ENCODE measurements at regions of chr17 and their contacts with region 1.

Region 1: GRCh38 chr17:39653662-39654331 is 11.4 kb upstream of the TCAP start:
- DNase-seq: peak; percentile 93
- ATAC-seq: peak; percentile 46
- H3K4me3 Mint-ChIP-seq: no peak overlapping the region
- H3K27ac Mint-ChIP-seq: no peak overlapping the region; the same call in 1 of the 2 replicates
- H3K4me1 Mint-ChIP-seq: peaks cover 46% of the 10 kb centered on the region
- H3K27me3 Mint-ChIP-seq: no peaks in the 10 kb centered on the region
- CTCF ChIP-seq: peak; percentile 92

Region 2: GRCh38 chr17:39393736-39394135 is 260.1 kb before region 1 on chr17:
- CTCF ChIA-PET with region 1: no interaction called
- POLR2A ChIA-PET with region 1: no interaction called
- DNase-seq: no peak
- ATAC-seq: no peak
- H3K4me3 Mint-ChIP-seq: no peak overlapping the region
- H3K27ac Mint-ChIP-seq: no peak overlapping the region
- H3K4me1 Mint-ChIP-seq: no peaks in the 10 kb centered on the region
- H3K27me3 Mint-ChIP-seq: no peaks in the 10 kb centered on the region
- CTCF ChIP-seq: no peak

Region 3: GRCh38 chr17:39450847-39451581 is 202.8 kb before region 1 on chr17 and contains the start of gene MED1:
- CTCF ChIA-PET with region 1: no interaction called
- POLR2A ChIA-PET with region 1: no interaction called
- DNase-seq: peak; percentile 94
- ATAC-seq: peak; percentile 98
- H3K4me3 Mint-ChIP-seq: peak within 1 kb of the TSS; percentile 99
- H3K27ac Mint-ChIP-seq: peak within 1 kb of the TSS; percentile 98
- H3K4me1 Mint-ChIP-seq: peaks cover 7% of the 10 kb centered on the region
- H3K27me3 Mint-ChIP-seq: no peaks in the 10 kb centered on the region; the same call in 1 of the 2 replicates
- CTCF ChIP-seq: no peak
- total RNA-seq, gene MED1: 47.0 to 50.4 TPM (median 47.9 TPM) in 3 replicates

Region 4: GRCh38 chr17:39517224-39517623 is 136.6 kb before region 1 on chr17:
- CTCF ChIA-PET with region 1: no interaction called
- POLR2A ChIA-PET with region 1: no interaction called
- DNase-seq: no peak
- ATAC-seq: no peak
- H3K4me3 Mint-ChIP-seq: no peak overlapping the region
- H3K27ac Mint-ChIP-seq: no peak overlapping the region
- H3K4me1 Mint-ChIP-seq: no peaks in the 10 kb centered on the region
- H3K27me3 Mint-ChIP-seq: no peaks in the 10 kb centered on the region
- CTCF ChIP-seq: no peak

Region 5: DNA sequence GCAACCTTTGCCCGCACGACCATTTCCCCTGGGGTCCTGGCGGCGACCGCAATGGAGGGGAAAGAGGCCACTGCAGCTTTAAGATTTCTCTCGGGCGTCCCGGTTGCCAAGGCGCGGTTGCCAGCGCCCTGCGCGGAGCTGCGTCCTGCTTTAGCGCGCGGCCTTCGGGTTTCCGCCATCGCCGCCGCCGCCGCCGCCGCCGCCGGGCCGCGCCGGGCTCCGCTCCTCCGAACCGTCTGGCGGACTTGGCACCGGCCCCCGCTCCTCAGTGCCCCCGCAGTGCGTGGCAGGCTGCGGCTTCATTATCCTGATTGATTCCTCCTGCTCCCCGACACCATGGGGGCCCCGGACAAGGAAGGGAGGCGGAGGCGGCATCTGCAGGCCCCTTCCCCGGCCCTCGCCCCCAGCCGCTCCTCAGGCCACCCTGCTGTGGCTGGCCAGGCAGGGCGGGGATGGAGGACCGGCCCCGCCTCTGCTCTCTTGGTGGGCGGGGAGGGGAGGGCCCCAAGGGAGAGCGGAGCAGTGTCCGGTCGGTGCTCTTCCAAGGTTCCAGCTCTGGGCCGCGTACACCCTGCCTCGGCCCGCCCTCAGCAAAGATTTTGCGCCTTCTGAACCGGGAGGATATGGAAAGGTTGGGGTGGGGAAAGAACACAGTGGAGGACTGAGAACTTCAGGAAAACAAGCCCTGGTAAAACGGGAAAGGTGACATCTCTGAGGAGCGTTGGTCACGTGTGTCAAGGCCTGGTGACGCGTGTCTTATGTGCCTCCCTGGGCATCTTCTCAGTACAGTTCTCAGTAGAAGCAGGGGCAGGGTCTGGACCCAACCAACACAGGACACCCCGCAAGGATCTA is 80.1 kb before region 1 on chr17:
- CTCF ChIA-PET with region 1: interaction called, 10 read pairs
- POLR2A ChIA-PET with region 1: no interaction called
- DNase-seq: peak; percentile 70
- ATAC-seq: peak; percentile 82
- H3K4me3 Mint-ChIP-seq: peak overlapping the region; percentile 79
- H3K27ac Mint-ChIP-seq: peak overlapping the region; percentile 73
- H3K4me1 Mint-ChIP-seq: peaks cover 12% of the 10 kb centered on the region
- H3K27me3 Mint-ChIP-seq: peaks cover 30% of the 10 kb centered on the region
- CTCF ChIP-seq: no peak

Region 6: GRCh38 chr17:39636927-39637736 is 16.7 kb before region 1 on chr17 and contains the start of gene STARD3:
- CTCF ChIA-PET with region 1: interaction called, 851 read pairs
- POLR2A ChIA-PET with region 1: interaction called, 3 read pairs
- DNase-seq: peak; percentile 94
- ATAC-seq: peak; percentile 72
- H3K4me3 Mint-ChIP-seq: peak within 1 kb of the TSS; percentile 76
- H3K27ac Mint-ChIP-seq: peak within 1 kb of the TSS; percentile 64
- H3K4me1 Mint-ChIP-seq: peaks cover 70% of the 10 kb centered on the region
- H3K27me3 Mint-ChIP-seq: no peaks in the 10 kb centered on the region
- CTCF ChIP-seq: no peak
- total RNA-seq, gene STARD3: 64.9 to 75.3 TPM (median 65.4 TPM) in 3 replicates

Region 7: GRCh38 chr17:39677542-39678339 is 23.9 kb after region 1 on chr17:
- CTCF ChIA-PET with region 1: interaction called, 272 read pairs
- POLR2A ChIA-PET with region 1: no interaction called
- DNase-seq: no peak
- ATAC-seq: no peak
- H3K4me3 Mint-ChIP-seq: no peak overlapping the region
- H3K27ac Mint-ChIP-seq: no peak overlapping the region
- H3K4me1 Mint-ChIP-seq: peaks cover 22% of the 10 kb centered on the region
- H3K27me3 Mint-ChIP-seq: no peaks in the 10 kb centered on the region
- CTCF ChIP-seq: no peak

Region 8: GRCh38 chr17:39704821-39705551 is 51.2 kb after region 1 on chr17:
- CTCF ChIA-PET with region 1: interaction called, 17 read pairs
- POLR2A ChIA-PET with region 1: interaction called, 5 read pairs
- DNase-seq: peak; percentile 38
- ATAC-seq: peak; percentile 62
- H3K4me3 Mint-ChIP-seq: no peak overlapping the region; the same call in 1 of the 2 replicates
- H3K27ac Mint-ChIP-seq: peak overlapping the region; percentile 92
- H3K4me1 Mint-ChIP-seq: peaks cover 51% of the 10 kb centered on the region
- H3K27me3 Mint-ChIP-seq: no peaks in the 10 kb centered on the region
- CTCF ChIP-seq: no peak

Region 9: DNA sequence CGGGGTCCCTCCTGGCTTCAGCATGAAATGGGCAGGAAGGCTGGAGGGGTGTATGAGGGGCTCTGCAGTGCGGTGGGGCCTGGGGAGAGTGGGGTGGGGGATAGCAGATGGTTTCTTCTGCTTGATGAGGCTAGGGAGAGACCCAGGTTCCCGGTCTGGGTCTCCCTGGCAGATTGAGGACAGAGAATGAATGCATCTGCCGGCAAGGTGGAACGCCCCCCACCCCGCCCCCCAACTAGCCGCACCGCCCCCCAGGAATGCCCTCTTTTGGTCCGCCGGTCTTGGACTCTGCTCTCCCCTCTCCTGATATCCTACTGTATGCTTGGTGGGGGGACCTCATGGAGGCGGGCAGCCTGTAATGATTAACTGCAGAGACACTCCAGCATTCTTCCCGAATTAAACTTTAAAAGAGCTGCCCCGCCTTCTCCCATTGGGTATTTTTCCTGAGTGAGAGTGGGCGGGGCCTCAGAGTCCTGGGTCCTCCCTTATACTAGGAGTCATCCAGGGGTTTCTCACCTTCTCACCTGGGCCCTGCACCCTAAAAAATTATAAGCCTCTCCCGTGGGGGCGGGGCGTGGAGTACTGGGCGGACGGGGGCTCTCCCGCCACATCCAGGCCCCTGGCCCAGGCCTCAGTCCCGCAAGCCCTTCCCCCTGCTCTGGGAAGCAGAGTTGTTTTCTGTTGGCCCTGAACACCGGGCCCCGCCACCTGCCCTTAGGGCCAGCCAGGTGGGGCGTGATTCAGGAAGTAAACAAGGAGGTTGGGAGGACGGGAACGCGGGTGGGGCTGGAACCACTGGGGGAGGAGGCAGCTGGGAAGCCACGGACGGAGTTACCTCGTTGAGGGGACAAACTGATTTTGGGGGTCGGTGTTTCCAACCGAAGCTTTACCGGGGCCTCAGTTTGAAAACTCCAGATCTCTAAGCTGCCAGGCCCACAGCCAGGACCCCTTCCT is 85.4 kb after region 1 on chr17:
- CTCF ChIA-PET with region 1: no interaction called
- POLR2A ChIA-PET with region 1: no interaction called
- DNase-seq: peak; percentile 71
- ATAC-seq: peak; percentile 12
- H3K4me3 Mint-ChIP-seq: peak overlapping the region; percentile 91
- H3K27ac Mint-ChIP-seq: peak overlapping the region; percentile 98
- H3K4me1 Mint-ChIP-seq: peaks cover 38% of the 10 kb centered on the region
- H3K27me3 Mint-ChIP-seq: no peaks in the 10 kb centered on the region; the same call in 1 of the 2 replicates
- CTCF ChIP-seq: no peak

Measured in WTC11 (cell line).